H1 (cell line): ENCODE measurements at regions of chr6 and their contacts with region 1.

Region 1: DNA sequence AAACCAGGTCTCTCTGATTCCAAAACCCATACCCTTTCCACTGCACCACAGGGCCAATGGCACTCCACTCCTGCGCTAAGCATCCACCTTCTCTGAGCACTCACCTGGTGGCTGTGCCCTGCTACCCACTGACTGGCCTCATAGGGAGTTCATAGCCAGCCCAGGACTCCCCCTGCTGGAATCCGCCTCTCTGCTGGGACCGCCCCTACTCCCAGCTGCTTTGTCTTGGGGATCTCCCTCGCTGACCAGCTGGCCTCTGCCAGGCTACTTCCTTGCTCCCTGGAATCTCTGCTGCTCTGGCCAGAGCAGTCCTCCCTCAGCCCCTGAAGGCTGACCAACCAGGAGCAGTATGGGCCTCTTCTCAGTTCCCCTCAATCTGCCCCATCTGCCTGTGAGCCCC is 129.7 kb downstream of the FAXC start:
- DNase-seq: peak; percentile 67 to 73
- H3K4me3 ChIP-seq: no peak overlapping the region
- H3K27ac ChIP-seq: no peak overlapping the region
- H3K4me1 ChIP-seq: peaks cover 0 to 4% (median 2%) of the 10 kb centered on the region in 4 experiments; a peak in 4 of 7 replicates
- H3K27me3 ChIP-seq: no peaks in the 10 kb centered on the region
- CTCF ChIP-seq: peak; percentile 59 to 68 (median 62)
- EP300 ChIP-seq: no peak
- POLR2A ChIP-seq: no peak
- RAD21 ChIP-seq: peak; percentile 48 to 65; a peak in 3 of 4 replicates

Region 2: DNA sequence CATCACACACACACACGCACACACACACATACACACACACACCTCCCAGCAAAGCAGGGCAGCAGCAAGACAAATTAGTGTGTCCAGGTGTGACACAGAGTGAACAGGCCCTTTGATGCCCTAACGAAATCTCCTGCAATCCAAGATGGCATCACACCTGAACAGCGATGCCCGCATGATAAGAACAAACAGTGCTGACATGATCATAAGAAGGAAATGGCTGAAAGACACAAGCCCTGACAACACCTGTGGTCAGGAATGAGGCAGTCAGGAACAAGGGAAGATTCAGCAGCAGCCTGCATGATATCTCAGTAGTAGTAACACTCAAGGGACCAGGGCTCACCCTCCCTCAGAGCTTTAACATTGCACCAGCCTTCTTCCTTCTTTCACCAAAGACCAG is 27.2 kb before region 1 on chr6:
- CTCF ChIA-PET with region 1: interaction called, 11 read pairs
- POLR2A ChIA-PET with region 1: no interaction called
- DNase-seq: no peak
- H3K4me3 ChIP-seq: no peak overlapping the region
- H3K27ac ChIP-seq: no peak overlapping the region
- H3K4me1 ChIP-seq: no peaks in the 10 kb centered on the region
- H3K27me3 ChIP-seq: no peaks in the 10 kb centered on the region
- CTCF ChIP-seq: no peak
- EP300 ChIP-seq: no peak
- POLR2A ChIP-seq: no peak
- RAD21 ChIP-seq: no peak